Testis (tissue), 5 donors: ENCODE measurements at regions of chr16 and their contacts with region 1.

Region 1: DNA sequence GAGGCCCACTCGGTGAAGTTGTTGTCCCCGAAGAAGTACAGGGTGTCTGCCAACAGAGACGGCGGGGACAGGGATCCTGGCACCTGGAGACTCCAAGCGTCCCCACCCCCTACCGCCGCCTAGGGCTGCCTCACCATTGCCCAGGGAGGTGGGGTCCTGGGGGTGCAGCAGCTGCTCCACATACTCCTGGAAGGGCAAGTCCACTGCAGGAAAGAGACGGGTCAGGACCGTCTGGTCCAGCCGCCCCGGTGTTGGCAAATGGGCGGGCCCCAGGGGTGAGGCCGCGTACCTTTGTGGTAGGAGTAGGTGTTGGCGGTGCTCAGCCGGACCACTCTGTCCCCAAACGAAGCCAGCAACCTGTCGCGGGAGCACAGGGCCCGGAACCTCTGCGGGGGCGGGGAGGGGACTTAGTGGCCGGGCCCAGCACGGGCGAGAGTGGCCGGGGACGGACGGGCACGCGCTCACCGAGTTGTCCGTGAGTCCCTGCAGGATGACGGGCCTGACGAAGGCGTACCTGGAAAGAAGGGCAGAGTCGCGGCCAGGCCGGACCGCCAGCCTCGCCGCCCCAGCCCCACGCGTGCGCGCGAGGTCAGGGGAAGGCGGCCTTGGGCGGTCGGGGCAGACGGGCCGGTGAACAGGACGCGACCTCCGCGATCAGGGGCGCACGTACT is 603 bp downstream of the JMJD8 start:
- DNase-seq: no peak
- H3K4me3 ChIP-seq: peak overlapping the region; percentile 51 to 56
- H3K27ac ChIP-seq: peak overlapping the region; percentile 45 to 79
- H3K4me1 ChIP-seq: peaks cover 40% of the 10 kb centered on the region
- H3K27me3 ChIP-seq: no peaks in the 10 kb centered on the region
- CTCF ChIP-seq: no peak
- POLR2A ChIP-seq: no peak

Region 2: GRCh38 chr16:740764-741505 is 57.4 kb after region 1 on chr16 and contains the start of gene CIAO3:
- intact Hi-C with region 1: loop called (anchors 2 kb)
- DNase-seq: peak; percentile 88
- H3K4me3 ChIP-seq: peak within 1 kb of the TSS; percentile 74 to 91
- H3K27ac ChIP-seq: peak within 1 kb of the TSS in 1 of 2 donors; percentile 19
- H3K4me1 ChIP-seq: peaks cover 14% of the 10 kb centered on the region
- H3K27me3 ChIP-seq: no peaks in the 10 kb centered on the region
- CTCF ChIP-seq: peak; percentile 90 to 99 (median 98)
- POLR2A ChIP-seq: no peak
- total RNA-seq, gene CIAO3: 58.0 to 59.0 TPM